Common myeloid progenitor, CD34-positive (primary cell): ENCODE measurements at regions of chr4 and their contacts with region 1.

Region 1: DNA sequence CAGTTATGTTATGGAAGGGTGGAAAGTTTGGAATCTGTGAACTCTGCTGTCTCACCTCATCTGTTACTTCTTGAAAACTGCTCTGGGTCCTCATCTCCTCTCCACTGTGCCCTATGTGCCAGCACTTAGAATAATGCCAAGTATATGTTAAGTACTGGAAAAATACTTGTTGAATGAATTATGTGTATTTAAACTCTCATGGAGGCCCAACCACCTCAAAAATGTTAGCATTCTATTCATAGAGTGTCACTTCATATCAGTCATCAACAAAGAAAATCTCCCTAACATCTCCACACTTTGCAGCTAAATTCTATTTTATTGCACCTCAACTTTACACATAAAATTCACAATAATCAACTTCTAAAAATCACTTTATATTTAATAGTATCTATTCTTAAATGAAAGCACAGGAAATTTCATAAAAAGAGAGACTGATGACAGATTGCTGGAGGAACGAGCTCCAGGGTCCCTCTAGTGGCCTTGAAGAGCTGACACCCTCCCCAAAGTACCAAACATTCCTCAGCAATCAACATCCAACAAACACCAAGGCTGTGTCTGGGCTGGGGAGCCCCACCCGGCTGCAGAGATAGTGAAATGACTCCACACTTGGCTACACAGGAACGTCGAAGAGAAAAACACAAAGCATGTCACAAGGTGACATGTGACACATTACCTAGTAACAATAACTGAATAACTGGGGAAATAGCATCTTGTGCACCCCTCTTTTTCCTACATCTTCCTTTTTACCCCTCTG is 45.8 kb downstream of the SLC39A8 start:
- DNase-seq: peak; percentile 44 to 73 (median 72)
- H3K4me3 ChIP-seq: no peak overlapping the region
- H3K27ac ChIP-seq: peak overlapping the region in 1 of 2 experiments; percentile 50
- H3K4me1 ChIP-seq: peaks cover 3 to 9% (median 8%) of the 10 kb centered on the region in 4 experiments
- H3K27me3 ChIP-seq: no peaks in the 10 kb centered on the region

Region 2: GRCh38 chr4:102312447-102312846 is 12.9 kb after region 1 on chr4:
- CTCF ChIA-PET with region 1: interaction called, 11 read pairs
- POLR2A ChIA-PET with region 1: no interaction called
- DNase-seq: no peak
- H3K4me3 ChIP-seq: no peak overlapping the region
- H3K27ac ChIP-seq: no peak overlapping the region
- H3K4me1 ChIP-seq: peaks cover 0 to 7% (median 1%) of the 10 kb centered on the region in 4 experiments
- H3K27me3 ChIP-seq: no peaks in the 10 kb centered on the region